Endothelial cell of umbilical vein (primary cell): ENCODE measurements at regions of chr10 and their contacts with region 1.

Region 1: GRCh38 chr10:36171953-36172940 is 530.2 kb upstream of the FZD8 start:
- DNase-seq: peak; percentile 95
- H3K4me3 ChIP-seq: peak overlapping the region in 1 of 3 experiments; percentile 22
- H3K27ac ChIP-seq: peak overlapping the region; percentile 97
- H3K4me1 ChIP-seq: peaks cover 38% of the 10 kb centered on the region
- H3K27me3 ChIP-seq: no peaks in the 10 kb centered on the region
- CTCF ChIP-seq: no peak
- POLR2A ChIP-seq: no peak

Region 2: GRCh38 chr10:35916791-35917190 is 255.5 kb before region 1 on chr10:
- CTCF ChIA-PET with region 1: no interaction called
- POLR2A ChIA-PET with region 1: no interaction called
- dilution Hi-C with region 1: no loop called
- intact Hi-C with region 1: loop called (anchors 5 kb)
- DNase-seq: no peak
- H3K4me3 ChIP-seq: no peak overlapping the region
- H3K27ac ChIP-seq: no peak overlapping the region
- H3K4me1 ChIP-seq: peaks cover 20% of the 10 kb centered on the region
- H3K27me3 ChIP-seq: no peaks in the 10 kb centered on the region
- CTCF ChIP-seq: peak in 1 of 2 donors; percentile 20
- POLR2A ChIP-seq: no peak

Region 3: GRCh38 chr10:36066102-36066501 is 106.1 kb before region 1 on chr10:
- CTCF ChIA-PET with region 1: no interaction called
- POLR2A ChIA-PET with region 1: no interaction called
- dilution Hi-C with region 1: no loop called
- intact Hi-C with region 1: no loop called
- DNase-seq: no peak
- H3K4me3 ChIP-seq: no peak overlapping the region
- H3K27ac ChIP-seq: no peak overlapping the region
- H3K4me1 ChIP-seq: no peaks in the 10 kb centered on the region
- H3K27me3 ChIP-seq: no peaks in the 10 kb centered on the region
- CTCF ChIP-seq: no peak
- POLR2A ChIP-seq: no peak

Region 4: DNA sequence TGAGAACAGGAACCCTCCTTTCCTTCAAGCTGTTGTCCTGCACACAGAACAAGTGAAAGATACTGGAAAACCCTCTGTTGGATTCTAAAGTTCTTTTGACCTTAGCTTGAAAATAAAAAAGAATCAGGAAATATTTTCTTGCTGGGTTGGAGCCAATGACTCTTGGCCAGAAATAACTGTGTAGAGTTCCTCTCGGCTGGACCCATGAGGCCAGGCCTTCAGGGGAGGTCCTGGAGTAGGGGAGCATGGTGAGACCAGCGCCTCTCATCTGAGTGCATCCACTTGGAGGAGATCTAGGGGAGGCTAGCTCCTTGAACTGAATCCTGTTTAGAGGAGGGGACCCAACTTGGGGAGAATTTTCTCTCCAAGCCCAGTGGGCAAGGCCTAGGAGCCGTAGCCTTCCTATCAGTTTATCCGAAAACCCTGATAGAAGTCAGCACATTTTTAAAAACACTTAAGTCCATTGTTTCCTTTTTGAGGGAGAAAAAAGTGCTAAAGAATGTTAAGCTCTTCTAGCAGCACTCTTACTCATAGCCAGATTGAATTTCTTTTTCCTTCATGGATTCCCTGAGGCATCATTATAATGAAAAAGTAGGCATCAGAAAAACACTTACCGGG is 317.5 kb after region 1 on chr10:
- CTCF ChIA-PET with region 1: interaction called, 10 read pairs
- POLR2A ChIA-PET with region 1: no interaction called
- dilution Hi-C with region 1: no loop called
- intact Hi-C with region 1: loop called (anchors 5 kb)
- DNase-seq: peak; percentile 93
- H3K4me3 ChIP-seq: no peak overlapping the region
- H3K27ac ChIP-seq: peak overlapping the region; percentile 91
- H3K4me1 ChIP-seq: peaks cover 53% of the 10 kb centered on the region
- H3K27me3 ChIP-seq: no peaks in the 10 kb centered on the region
- CTCF ChIP-seq: no peak
- POLR2A ChIP-seq: no peak

Region 5: DNA sequence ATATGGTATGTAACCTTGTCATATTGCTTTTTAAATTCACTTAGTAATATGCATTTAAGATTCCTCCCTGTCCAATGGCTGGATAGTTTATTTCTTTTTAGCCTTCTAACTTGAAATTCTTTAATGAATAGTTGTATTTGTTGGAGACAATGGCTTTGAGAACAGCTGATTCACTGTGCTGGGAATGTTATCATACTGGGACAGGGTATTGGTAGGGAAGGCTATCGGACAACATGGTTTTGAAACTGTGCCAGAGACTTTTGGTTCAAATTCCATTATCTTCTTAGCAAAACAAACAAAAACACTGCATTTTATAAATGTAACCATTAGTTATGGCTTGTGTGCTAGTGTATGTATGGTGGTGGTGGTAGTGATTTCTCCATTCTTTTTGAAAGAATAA is 436.0 kb after region 1 on chr10:
- CTCF ChIA-PET with region 1: no interaction called
- POLR2A ChIA-PET with region 1: no interaction called
- dilution Hi-C with region 1: no loop called
- intact Hi-C with region 1: loop called (anchors 2 kb)
- DNase-seq: peak; percentile 91
- H3K4me3 ChIP-seq: no peak overlapping the region
- H3K27ac ChIP-seq: peak overlapping the region; percentile 75
- H3K4me1 ChIP-seq: peaks cover 36% of the 10 kb centered on the region
- H3K27me3 ChIP-seq: no peaks in the 10 kb centered on the region
- CTCF ChIP-seq: no peak
- POLR2A ChIP-seq: no peak